Caco-2 (cell line): ENCODE measurements at regions of chr3 and their contacts with region 1.

Region 1: DNA sequence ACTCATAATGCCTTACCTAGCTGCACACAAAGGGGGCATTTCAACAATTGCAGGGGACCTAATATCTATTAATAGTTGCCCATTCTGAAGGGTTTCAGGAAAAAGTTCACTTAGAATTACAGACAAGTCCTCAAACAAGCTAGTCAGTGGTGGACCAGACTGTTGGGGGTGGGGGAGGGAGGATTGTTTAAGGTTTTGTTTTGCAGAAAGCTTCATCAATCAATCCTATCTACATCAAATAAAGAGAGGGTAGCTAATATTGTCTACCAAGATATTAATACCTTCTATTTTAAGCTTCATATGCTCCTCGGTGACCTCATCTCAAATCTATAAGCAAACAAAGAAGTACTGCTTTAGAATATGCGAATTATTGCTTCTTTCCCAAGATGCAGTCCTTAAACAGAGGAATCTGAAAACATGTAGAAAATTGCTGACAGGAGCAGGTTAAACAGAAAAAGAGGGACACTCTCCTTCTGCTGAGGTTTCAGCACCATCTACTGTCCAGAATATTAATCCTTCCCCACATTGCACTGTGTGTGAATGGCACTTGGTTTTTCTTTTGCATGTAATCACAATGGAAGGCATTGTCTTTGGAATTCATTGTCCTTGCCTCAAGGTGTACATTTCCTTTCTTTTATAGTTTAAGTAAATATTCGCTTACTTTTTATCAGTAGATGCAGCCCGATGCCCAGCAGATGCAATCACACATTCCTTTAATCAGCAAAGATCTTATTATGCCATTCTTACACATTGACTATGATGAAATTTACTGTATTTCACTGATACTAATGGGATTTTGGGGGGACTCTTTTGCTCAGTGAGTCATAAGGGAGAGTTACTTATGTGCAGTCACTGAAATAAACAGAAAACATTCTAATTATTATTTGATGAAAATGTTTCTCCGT is 94.7 kb downstream of the IL5RA start:
- DNase-seq: peak in 1 of 2 experiments; percentile 61
- H3K4me3 ChIP-seq: no peak overlapping the region
- H3K4me3 Mint-ChIP-seq: no peak overlapping the region
- H3K27ac Mint-ChIP-seq: no peak overlapping the region
- H3K4me1 ChIP-seq: peaks cover 23% of the 10 kb centered on the region
- H3K4me1 Mint-ChIP-seq: peaks cover 21% of the 10 kb centered on the region
- H3K27me3 ChIP-seq: no peaks in the 10 kb centered on the region
- H3K27me3 Mint-ChIP-seq: no peaks in the 10 kb centered on the region
- CTCF ChIP-seq: peak; percentile 43 to 50

Region 2: GRCh38 chr3:1824359-1824758 is 1191.1 kb before region 1 on chr3:
- CTCF ChIA-PET with region 1: no interaction called
- POLR2A ChIA-PET with region 1: no interaction called
- intact Hi-C with region 1: loop called (anchors 2 kb)
- DNase-seq: no peak
- H3K4me3 ChIP-seq: no peak overlapping the region
- H3K4me3 Mint-ChIP-seq: no peak overlapping the region
- H3K27ac Mint-ChIP-seq: no peak overlapping the region
- H3K4me1 ChIP-seq: no peaks in the 10 kb centered on the region
- H3K4me1 Mint-ChIP-seq: no peaks in the 10 kb centered on the region
- H3K27me3 ChIP-seq: no peaks in the 10 kb centered on the region
- H3K27me3 Mint-ChIP-seq: no peaks in the 10 kb centered on the region
- CTCF ChIP-seq: no peak

Region 3: DNA sequence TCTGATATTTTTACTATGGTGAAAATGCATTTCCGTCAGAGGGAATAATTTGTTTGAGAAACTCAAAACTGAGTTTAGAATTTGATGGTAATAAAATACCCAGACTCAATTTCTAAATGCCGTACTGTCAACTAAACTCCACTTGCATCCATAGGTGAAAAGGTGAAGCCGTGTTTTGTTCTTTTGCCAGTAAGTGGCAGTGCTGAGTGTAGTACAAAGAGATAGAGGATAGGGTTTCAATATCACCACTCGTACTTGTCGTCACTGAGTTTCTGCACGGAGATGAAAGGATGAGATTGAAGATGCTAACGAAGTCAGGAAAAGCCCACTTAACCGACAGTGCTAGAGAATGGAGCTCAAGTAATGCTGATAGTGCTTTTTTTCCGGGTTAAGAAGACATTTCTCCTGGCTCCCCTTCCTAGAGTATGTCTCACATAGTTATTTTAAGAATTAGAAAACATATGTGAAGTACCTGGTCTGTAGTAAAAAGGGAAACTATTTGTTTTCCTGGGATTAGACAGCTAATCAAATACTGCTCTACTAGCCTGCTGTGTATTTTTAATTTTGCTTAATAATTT is 250.3 kb before region 1 on chr3:
- CTCF ChIA-PET with region 1: no interaction called
- POLR2A ChIA-PET with region 1: no interaction called
- intact Hi-C with region 1: loop called (anchors 1 kb)
- DNase-seq: peak in 1 of 2 experiments; percentile 37
- H3K4me3 ChIP-seq: no peak overlapping the region
- H3K4me3 Mint-ChIP-seq: no peak overlapping the region
- H3K27ac Mint-ChIP-seq: no peak overlapping the region
- H3K4me1 ChIP-seq: peaks cover 2% of the 10 kb centered on the region
- H3K4me1 Mint-ChIP-seq: peaks cover 3% of the 10 kb centered on the region
- H3K27me3 ChIP-seq: no peaks in the 10 kb centered on the region
- H3K27me3 Mint-ChIP-seq: no peaks in the 10 kb centered on the region
- CTCF ChIP-seq: peak in 1 of 2 experiments; percentile 65

Region 4: DNA sequence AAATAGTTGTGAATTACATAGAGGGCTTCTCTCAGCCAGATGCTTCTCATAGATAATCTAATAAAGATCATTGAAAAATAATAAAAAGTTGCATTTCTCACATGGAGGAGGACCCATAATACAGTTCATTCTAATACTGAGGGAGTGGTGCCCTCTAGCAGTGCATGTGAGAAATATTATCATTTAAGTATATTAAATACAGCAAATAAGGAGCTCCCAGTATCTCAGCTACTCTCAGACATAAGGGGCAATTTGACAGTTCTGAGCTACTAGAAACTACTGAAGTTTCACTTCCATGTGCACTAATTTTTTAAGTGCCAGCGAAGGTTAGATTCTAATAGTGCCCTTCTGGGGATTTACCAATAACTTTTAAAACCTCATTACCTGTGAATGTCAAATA is 93.5 kb before region 1 on chr3:
- CTCF ChIA-PET with region 1: interaction called, 10 read pairs
- POLR2A ChIA-PET with region 1: no interaction called
- intact Hi-C with region 1: loop called (anchors 1 kb)
- DNase-seq: peak in 1 of 2 experiments; percentile 24
- H3K4me3 ChIP-seq: no peak overlapping the region
- H3K4me3 Mint-ChIP-seq: no peak overlapping the region
- H3K27ac Mint-ChIP-seq: no peak overlapping the region
- H3K4me1 ChIP-seq: no peaks in the 10 kb centered on the region
- H3K4me1 Mint-ChIP-seq: no peaks in the 10 kb centered on the region
- H3K27me3 ChIP-seq: no peaks in the 10 kb centered on the region
- H3K27me3 Mint-ChIP-seq: no peaks in the 10 kb centered on the region
- CTCF ChIP-seq: peak; percentile 40 to 46

Region 5: DNA sequence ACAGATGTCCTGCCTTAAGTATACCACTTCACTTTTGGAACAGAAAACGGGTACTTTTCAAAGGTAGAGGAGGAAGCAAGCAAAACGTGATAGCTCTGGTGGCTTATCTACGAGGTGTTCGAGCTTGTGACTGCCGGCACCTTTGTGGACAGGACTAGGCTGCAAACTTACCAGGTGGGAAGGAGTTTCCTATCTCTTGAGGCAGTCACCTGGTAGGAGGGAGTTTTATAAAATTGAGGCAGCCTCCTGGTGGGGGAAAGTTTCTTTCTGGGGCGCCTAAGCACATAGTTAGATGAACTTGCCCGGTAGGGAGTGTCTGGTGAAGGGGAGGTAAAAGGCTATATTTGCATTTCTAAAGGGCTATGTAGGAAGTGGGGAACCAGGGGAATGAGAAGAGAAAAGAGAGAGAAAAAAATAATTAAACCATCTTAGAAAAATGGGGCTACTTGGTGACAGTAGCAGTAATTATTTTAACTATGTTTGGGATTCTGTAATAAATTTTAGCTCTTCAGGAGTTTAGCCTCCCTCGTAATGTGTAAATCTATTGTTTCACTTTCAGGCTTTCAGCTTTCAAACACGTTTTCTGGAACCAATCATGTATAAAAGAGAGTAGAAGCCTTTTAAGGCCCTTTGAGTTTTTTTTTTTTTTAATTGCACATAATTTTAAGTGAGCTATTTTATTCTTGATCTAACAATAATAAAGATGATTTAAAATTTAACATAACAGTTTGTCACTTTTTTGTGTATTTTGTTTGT is 36.3 kb before region 1 on chr3:
- CTCF ChIA-PET with region 1: no interaction called
- POLR2A ChIA-PET with region 1: no interaction called
- intact Hi-C with region 1: no loop called
- DNase-seq: no peak
- H3K4me3 ChIP-seq: no peak overlapping the region
- H3K4me3 Mint-ChIP-seq: no peak overlapping the region
- H3K27ac Mint-ChIP-seq: no peak overlapping the region
- H3K4me1 ChIP-seq: no peaks in the 10 kb centered on the region
- H3K4me1 Mint-ChIP-seq: no peaks in the 10 kb centered on the region
- H3K27me3 ChIP-seq: no peaks in the 10 kb centered on the region
- H3K27me3 Mint-ChIP-seq: no peaks in the 10 kb centered on the region
- CTCF ChIP-seq: no peak